Gastrocnemius medialis (tissue), 4 donors: ENCODE measurements at regions of chr6 and their contacts with region 1.

Region 1: GRCh38 chr6:34392497-34393190 is at the start of gene NUDT3:
- DNase-seq: peak; percentile 91 to 94
- ATAC-seq: peak; percentile 73 to 75
- H3K4me3 ChIP-seq: peak within 1 kb of the TSS; percentile 76 to 99 (median 87)
- H3K27ac ChIP-seq: peak within 1 kb of the TSS; percentile 98 to 100 (median 98)
- H3K4me1 ChIP-seq: peaks cover 41 to 48% of the 10 kb centered on the region in 2 donors
- H3K27me3 ChIP-seq: no peaks in the 10 kb centered on the region
- CTCF ChIP-seq: peak; percentile 87 to 94 (median 91)
- POLR2A ChIP-seq: peak; percentile 91 to 93
- total RNA-seq, gene NUDT3: 40.0 to 71.9 (median 50.6) TPM

Region 2: DNA sequence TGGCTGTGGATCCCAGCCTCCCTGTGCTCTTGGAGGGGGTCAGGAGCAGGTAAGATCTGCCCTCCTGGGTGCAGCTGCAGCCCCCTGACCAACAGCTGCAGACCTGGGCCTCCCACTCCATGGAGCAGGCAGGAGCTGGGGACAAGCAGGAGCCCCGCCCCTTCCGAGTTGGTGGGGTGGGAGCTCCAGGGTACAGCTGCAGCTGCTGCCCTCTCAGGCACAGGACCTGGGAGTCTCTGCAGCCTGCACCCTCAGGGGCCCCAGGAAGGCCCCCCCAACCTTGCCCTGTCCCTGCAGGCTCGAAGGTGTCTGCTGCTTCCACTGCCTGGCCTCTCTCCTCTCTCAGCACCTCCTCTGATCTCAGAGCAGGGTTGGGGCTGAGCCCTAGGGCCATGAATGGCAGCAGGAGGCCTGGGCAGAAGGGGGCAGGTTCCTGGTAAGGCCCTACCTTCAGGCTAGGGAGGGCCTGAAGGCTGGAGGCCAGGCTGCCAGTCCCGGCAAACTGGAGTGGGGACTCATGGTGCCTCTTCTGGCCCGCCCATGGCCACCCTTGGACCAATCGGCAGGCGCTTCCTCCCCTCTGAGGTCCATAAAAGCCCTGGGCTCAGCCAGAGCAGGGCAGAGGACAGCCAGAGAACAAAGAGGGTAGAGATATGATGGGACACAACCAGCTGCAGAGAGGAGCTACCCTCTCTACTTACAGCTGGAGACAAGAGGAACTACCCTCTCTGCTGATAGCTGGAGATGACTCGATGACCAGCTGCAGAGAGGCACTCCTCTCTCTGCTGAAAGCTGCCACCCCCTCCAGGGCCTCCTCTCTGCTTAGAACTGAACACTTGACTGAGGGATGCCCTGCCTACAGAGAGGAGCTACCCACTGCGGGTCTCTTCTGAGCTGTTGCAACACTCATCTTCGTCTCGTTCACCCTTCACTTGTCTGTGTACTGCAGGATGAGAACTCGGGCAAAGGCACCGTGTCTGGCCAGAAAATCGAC is 65.4 kb after region 1 on chr6:
- in situ Hi-C with region 1: no loop called
- intact Hi-C with region 1: no loop called
- DNase-seq: no peak
- ATAC-seq: no peak
- H3K4me3 ChIP-seq: no peak overlapping the region
- H3K27ac ChIP-seq: no peak overlapping the region
- H3K4me1 ChIP-seq: no peaks in the 10 kb centered on the region
- H3K27me3 ChIP-seq: no peaks in the 10 kb centered on the region
- CTCF ChIP-seq: no peak
- POLR2A ChIP-seq: no peak

Region 3: DNA sequence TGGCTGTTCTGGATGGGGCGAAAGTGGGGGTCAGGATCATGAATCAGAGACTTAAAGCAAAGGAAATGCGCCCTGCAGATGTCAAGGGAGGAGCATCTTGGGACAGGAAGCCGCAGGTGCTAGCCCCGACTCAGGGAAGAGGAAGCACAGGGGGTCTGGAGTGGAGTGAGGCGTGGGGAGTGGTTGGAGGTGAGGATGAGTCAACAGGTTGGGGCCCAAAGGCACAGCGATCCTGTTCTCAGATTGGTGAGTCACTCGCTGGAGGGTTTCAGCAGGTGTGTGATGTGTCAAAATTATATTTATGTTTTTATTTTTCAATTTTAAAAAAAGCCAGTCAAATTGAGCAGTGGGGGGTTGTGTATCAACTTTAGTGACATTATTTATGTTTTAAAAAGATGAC is 92.3 kb after region 1 on chr6:
- in situ Hi-C with region 1: no loop called
- intact Hi-C with region 1: no loop called
- DNase-seq: no peak
- ATAC-seq: no peak
- H3K4me3 ChIP-seq: no peak overlapping the region
- H3K27ac ChIP-seq: no peak overlapping the region
- H3K4me1 ChIP-seq: no peaks in the 10 kb centered on the region
- H3K27me3 ChIP-seq: no peaks in the 10 kb centered on the region
- CTCF ChIP-seq: no peak
- POLR2A ChIP-seq: no peak

Region 4: GRCh38 chr6:34575326-34575725 is 182.7 kb after region 1 on chr6:
- in situ Hi-C with region 1: no loop called
- intact Hi-C with region 1: no loop called
- DNase-seq: no peak
- ATAC-seq: no peak
- H3K4me3 ChIP-seq: no peak overlapping the region
- H3K27ac ChIP-seq: no peak overlapping the region
- H3K4me1 ChIP-seq: no peaks in the 10 kb centered on the region
- H3K27me3 ChIP-seq: peaks cover 0 to 7% (median 0%) of the 10 kb centered on the region in 3 donors
- CTCF ChIP-seq: no peak
- POLR2A ChIP-seq: no peak

Region 5: GRCh38 chr6:35259948-35260590 is 867.4 kb after region 1 on chr6:
- in situ Hi-C with region 1: no loop called
- intact Hi-C with region 1: loop called (anchors 5 kb)
- DNase-seq: peak; percentile 55 to 70
- ATAC-seq: peak; percentile 32 to 34
- H3K4me3 ChIP-seq: peak overlapping the region; percentile 74 to 90 (median 86)
- H3K27ac ChIP-seq: peak overlapping the region; percentile 93 to 99 (median 96)
- H3K4me1 ChIP-seq: peaks cover 35 to 53% of the 10 kb centered on the region in 2 donors
- H3K27me3 ChIP-seq: no peaks in the 10 kb centered on the region
- CTCF ChIP-seq: no peak
- POLR2A ChIP-seq: no peak